ENCODE measurements at regions of chr15 and their contacts with region 1.

Region 1: DNA sequence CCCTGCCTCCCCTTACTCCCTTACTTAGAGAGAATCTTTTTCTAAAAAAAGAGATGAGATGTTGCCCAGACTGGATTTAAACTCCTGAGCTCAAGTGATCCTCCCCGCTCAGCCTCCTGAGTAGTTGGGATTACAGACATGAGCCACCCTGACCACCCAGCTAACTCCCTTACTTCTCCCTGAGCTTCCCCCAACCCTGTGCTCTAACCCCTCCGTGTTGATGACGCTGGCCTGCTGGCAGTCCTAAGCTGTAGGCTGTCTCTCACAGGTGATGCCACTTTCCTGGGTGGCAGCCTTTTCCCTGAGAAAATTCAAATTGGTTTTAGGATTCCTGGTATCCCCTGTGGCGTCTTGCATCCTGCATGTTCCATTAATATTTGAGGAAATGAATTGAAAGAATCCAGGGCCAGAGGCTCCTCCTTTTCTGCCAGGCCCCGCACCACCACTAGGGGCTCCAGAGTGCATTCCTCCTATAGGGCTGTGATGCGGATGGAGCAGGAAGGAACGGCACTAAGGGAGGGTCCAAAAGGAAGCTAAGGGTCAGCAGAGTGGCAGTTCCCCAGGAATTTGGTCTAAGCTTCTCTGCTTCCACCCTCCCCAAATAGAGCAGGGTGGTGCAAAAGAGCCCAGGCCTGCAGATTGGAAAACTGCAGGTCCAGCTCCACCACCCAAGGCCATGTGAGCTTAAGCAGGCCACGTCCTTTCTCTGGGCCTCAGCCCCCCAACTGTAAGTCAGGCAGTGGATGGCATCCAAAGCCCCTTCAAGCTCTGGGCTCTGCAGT is 101.1 kb downstream of the DAPK2 start:
- DNase-seq: peak; percentile 73
- H3K4me3 Mint-ChIP-seq: no peak overlapping the region
- H3K27ac Mint-ChIP-seq: no peak overlapping the region
- H3K4me1 Mint-ChIP-seq: peaks cover 17% of the 10 kb centered on the region
- H3K27me3 Mint-ChIP-seq: no peaks in the 10 kb centered on the region
- CTCF ChIP-seq: peak; percentile 84

Region 2: GRCh38 chr15:63833021-63833696 is 112.0 kb before region 1 on chr15:
- CTCF ChIA-PET with region 1: interaction called, 3 read pairs
- POLR2A ChIA-PET with region 1: interaction called, 10 read pairs
- intact Hi-C with region 1: no loop called
- DNase-seq: peak; percentile 33
- H3K4me3 Mint-ChIP-seq: peak overlapping the region; percentile 99
- H3K27ac Mint-ChIP-seq: peak overlapping the region; percentile 99
- H3K4me1 Mint-ChIP-seq: peaks cover 24% of the 10 kb centered on the region
- H3K27me3 Mint-ChIP-seq: peaks cover 17% of the 10 kb centered on the region
- CTCF ChIP-seq: no peak

Region 3: GRCh38 chr15:63970621-63971426 is 25.6 kb after region 1 on chr15:
- CTCF ChIA-PET with region 1: interaction called, 23 read pairs
- POLR2A ChIA-PET with region 1: interaction called, 5 read pairs
- intact Hi-C with region 1: no loop called
- DNase-seq: no peak
- H3K4me3 Mint-ChIP-seq: no peak overlapping the region
- H3K27ac Mint-ChIP-seq: no peak overlapping the region
- H3K4me1 Mint-ChIP-seq: peaks cover 18% of the 10 kb centered on the region
- H3K27me3 Mint-ChIP-seq: no peaks in the 10 kb centered on the region
- CTCF ChIP-seq: no peak

Region 4: GRCh38 chr15:63991706-63992105 is 46.5 kb after region 1 on chr15:
- CTCF ChIA-PET with region 1: interaction called, 11 read pairs
- POLR2A ChIA-PET with region 1: no interaction called
- intact Hi-C with region 1: no loop called
- DNase-seq: no peak
- H3K4me3 Mint-ChIP-seq: no peak overlapping the region
- H3K27ac Mint-ChIP-seq: no peak overlapping the region
- H3K4me1 Mint-ChIP-seq: peaks cover 4% of the 10 kb centered on the region
- H3K27me3 Mint-ChIP-seq: no peaks in the 10 kb centered on the region
- CTCF ChIP-seq: no peak

Region 5: GRCh38 chr15:64010719-64011118 is 65.5 kb after region 1 on chr15:
- CTCF ChIA-PET with region 1: interaction called, 41 read pairs
- POLR2A ChIA-PET with region 1: interaction called, 28 read pairs
- intact Hi-C with region 1: no loop called
- DNase-seq: peak; percentile 97
- H3K4me3 Mint-ChIP-seq: peak overlapping the region; percentile 31
- H3K27ac Mint-ChIP-seq: peak overlapping the region; percentile 84
- H3K4me1 Mint-ChIP-seq: peaks cover 68% of the 10 kb centered on the region
- H3K27me3 Mint-ChIP-seq: no peaks in the 10 kb centered on the region
- CTCF ChIP-seq: no peak

Region 6: DNA sequence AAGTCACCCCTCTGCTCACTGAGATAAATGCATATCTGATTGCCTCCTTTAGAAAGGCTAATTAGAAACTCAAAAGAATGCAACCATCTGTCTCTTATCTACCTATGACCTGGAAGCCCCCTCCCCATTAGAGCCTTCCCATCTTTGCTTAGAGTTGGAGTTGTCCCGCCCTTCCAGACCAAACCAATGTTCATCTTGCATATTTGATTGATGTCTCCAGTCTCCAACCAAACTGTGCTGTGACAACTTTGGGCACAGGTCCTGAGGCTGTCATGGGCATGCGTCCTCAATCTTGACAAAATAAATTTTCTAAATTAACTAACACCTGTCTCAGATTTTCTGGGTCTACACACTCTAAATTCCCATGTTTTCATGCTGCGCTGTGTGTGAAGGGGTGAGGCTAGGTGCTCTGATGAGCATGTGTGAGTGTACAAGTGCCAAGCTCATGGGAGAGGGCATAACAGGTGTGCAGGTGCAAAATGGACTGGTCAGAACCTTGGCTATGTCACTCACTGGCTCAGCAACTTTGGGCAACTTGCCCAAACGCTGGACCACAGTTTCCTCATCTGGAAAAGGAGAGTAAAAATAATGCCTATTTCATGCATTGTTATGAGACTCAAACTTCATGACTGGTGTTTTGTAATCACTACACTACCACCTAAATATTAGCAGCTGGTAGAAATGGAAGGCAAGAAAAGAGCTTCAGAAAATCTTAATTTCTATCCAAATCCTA is 93.8 kb after region 1 on chr15:
- CTCF ChIA-PET with region 1: interaction called, 109 read pairs
- POLR2A ChIA-PET with region 1: interaction called, 3 read pairs
- intact Hi-C with region 1: no loop called
- DNase-seq: no peak
- H3K4me3 Mint-ChIP-seq: no peak overlapping the region
- H3K27ac Mint-ChIP-seq: no peak overlapping the region
- H3K4me1 Mint-ChIP-seq: no peaks in the 10 kb centered on the region
- H3K27me3 Mint-ChIP-seq: no peaks in the 10 kb centered on the region
- CTCF ChIP-seq: no peak

Region 7: DNA sequence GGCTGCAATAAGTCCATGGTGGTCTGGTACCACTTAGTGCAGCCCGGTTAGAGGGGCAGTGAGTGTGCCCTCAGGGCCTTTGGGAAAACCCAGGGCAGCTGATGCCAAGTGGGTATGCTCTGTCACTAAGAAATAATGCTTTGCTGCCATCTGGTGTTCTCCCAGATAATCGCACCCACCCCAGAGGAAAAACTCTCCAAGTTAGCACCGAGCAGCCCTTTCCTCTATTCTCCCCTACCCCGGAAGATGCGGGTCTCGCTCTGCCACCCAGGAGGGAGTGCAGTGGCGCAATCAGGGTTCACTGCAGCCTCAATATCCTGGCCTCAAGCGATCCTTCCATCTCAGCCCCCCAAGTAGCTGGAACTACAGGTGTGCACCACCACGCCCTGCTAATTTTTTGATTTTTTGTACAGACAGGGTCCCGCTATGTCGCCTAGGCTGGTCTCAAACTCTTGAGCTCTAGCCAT is 122.4 kb after region 1 on chr15:
- CTCF ChIA-PET with region 1: interaction called, 49 read pairs
- POLR2A ChIA-PET with region 1: no interaction called
- intact Hi-C with region 1: loop called (anchors 5 kb)
- DNase-seq: peak; percentile 67
- H3K4me3 Mint-ChIP-seq: no peak overlapping the region
- H3K27ac Mint-ChIP-seq: no peak overlapping the region
- H3K4me1 Mint-ChIP-seq: peaks cover 7% of the 10 kb centered on the region
- H3K27me3 Mint-ChIP-seq: no peaks in the 10 kb centered on the region
- CTCF ChIP-seq: peak; percentile 75

Measured in MCF 10A (cell line).